Activated CD4-positive, alpha-beta memory T cell treated with anti-CD3 and anti-CD28 coated beads for 36 hours (primary cell): ENCODE measurements at regions of chr2 and their contacts with region 1.

Region 1: GRCh38 chr2:177552422-177553175 is 160.0 kb downstream of the AGPS start:
- DNase-seq: peak; percentile 93
- H3K4me3 Mint-ChIP-seq: peak overlapping the region; percentile 97
- H3K27ac Mint-ChIP-seq: peak overlapping the region; percentile 100
- H3K4me1 Mint-ChIP-seq: peaks cover 8% of the 10 kb centered on the region
- H3K27me3 Mint-ChIP-seq: no peaks in the 10 kb centered on the region

Region 2: GRCh38 chr2:177325270-177325929 is 227.2 kb before region 1 on chr2:
- CTCF ChIA-PET with region 1: no interaction called
- POLR2A ChIA-PET with region 1: no interaction called
- intact Hi-C with region 1: no loop called
- DNase-seq: no peak
- H3K4me3 Mint-ChIP-seq: no peak overlapping the region
- H3K27ac Mint-ChIP-seq: no peak overlapping the region
- H3K4me1 Mint-ChIP-seq: peaks cover 3% of the 10 kb centered on the region
- H3K27me3 Mint-ChIP-seq: no peaks in the 10 kb centered on the region

Region 3: DNA sequence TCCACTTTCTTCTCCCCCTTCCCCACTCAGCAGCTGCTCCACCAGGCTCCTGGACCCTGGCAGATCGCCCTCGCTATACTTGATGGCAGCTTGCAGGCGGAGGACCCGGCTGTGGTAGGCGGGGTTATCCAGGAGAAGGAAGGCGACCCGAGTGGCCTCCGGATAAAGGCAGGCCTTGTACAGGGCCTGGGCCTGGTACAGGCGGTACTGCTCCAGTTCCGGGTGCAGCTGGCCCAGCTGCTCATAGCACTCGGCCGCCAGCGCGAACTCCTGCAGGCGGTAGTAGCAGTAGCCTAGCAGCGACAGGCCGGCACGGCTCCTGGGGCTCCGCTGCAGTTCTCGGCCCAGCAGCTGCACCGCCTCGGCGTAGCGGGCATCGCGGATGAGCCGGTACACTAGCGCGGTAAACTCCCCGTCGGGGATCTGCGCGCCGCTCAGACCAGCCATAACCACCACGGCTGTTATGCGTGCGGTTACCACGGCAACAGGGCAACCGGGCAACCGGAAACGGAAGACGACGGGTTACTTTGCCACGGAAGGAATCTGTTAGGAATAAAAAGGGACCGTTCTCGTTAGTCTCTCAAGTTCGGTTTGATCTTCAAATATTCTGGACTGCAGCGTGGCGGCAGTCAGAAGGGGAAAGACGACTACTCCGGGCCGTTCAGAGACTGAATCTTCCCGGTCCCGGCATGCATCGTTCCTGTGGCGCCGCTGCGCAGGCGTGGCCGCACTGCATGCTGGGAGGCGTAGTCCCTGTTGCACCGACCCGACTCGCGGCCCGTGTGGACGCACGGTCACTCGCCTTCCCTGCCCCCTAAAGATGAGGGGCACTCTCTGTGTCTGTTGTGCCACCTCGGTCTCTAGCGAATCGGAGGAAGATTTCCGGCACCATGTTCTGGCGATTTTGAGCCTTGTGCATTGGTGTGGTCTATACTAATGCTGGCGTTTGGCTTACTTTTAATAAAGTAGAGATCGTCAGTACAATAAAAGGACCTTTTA is 66.0 kb after region 1 on chr2:
- CTCF ChIA-PET with region 1: no interaction called
- POLR2A ChIA-PET with region 1: no interaction called
- intact Hi-C with region 1: loop called (anchors 1 kb)
- DNase-seq: peak; percentile 94
- H3K4me3 Mint-ChIP-seq: peak overlapping the region; percentile 92
- H3K27ac Mint-ChIP-seq: peak overlapping the region; percentile 99
- H3K4me1 Mint-ChIP-seq: peaks cover 4% of the 10 kb centered on the region
- H3K27me3 Mint-ChIP-seq: peaks cover 4% of the 10 kb centered on the region

Region 4: GRCh38 chr2:177842243-177842642 is 289.6 kb after region 1 on chr2:
- CTCF ChIA-PET with region 1: no interaction called
- POLR2A ChIA-PET with region 1: no interaction called
- intact Hi-C with region 1: no loop called
- DNase-seq: no peak
- H3K4me3 Mint-ChIP-seq: no peak overlapping the region
- H3K27ac Mint-ChIP-seq: no peak overlapping the region
- H3K4me1 Mint-ChIP-seq: no peaks in the 10 kb centered on the region
- H3K27me3 Mint-ChIP-seq: peaks cover 4% of the 10 kb centered on the region

Region 5: DNA sequence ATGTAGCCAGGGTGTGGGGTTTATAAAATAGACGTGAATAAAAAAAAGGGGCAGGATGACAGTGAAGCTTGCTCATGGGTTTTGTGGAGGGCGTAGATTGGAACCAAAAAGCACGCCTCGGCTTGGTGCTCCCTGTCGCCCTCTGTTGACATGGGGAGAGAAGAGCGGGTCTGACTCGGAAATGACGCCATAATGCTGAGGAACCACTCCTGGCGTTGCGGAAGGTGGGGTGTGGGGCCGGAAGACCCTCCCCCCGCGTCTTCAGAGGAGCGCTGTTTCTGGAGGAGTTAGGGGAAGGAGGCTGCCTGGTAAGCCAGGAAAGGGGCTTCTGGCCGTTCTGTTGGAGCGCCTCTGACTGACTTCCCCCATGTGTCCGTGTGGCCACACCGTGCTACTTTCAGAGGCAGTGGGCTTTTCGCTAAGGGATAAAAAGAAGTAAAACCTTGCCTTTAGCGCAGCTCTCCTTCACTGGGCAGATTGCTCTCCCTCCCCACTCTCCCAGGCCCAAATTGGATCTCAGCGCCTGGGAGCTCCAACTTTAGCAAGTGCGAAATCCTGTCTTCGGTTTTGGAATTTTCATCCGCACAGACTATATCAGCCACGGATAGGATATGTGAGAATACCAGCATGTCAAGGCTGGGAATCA is 970.5 kb after region 1 on chr2:
- CTCF ChIA-PET with region 1: no interaction called
- POLR2A ChIA-PET with region 1: no interaction called
- intact Hi-C with region 1: loop called (anchors 5 kb)
- DNase-seq: peak; percentile 92
- H3K4me3 Mint-ChIP-seq: peak overlapping the region; percentile 95
- H3K27ac Mint-ChIP-seq: peak overlapping the region; percentile 91
- H3K4me1 Mint-ChIP-seq: peaks cover 54% of the 10 kb centered on the region
- H3K27me3 Mint-ChIP-seq: no peaks in the 10 kb centered on the region